Activated naive CD4-positive, alpha-beta T cell treated with anti-CD3 and anti-CD28 coated beads for 36 hours (primary cell): ENCODE measurements at regions of chr20 and their contacts with region 1.

Region 1: DNA sequence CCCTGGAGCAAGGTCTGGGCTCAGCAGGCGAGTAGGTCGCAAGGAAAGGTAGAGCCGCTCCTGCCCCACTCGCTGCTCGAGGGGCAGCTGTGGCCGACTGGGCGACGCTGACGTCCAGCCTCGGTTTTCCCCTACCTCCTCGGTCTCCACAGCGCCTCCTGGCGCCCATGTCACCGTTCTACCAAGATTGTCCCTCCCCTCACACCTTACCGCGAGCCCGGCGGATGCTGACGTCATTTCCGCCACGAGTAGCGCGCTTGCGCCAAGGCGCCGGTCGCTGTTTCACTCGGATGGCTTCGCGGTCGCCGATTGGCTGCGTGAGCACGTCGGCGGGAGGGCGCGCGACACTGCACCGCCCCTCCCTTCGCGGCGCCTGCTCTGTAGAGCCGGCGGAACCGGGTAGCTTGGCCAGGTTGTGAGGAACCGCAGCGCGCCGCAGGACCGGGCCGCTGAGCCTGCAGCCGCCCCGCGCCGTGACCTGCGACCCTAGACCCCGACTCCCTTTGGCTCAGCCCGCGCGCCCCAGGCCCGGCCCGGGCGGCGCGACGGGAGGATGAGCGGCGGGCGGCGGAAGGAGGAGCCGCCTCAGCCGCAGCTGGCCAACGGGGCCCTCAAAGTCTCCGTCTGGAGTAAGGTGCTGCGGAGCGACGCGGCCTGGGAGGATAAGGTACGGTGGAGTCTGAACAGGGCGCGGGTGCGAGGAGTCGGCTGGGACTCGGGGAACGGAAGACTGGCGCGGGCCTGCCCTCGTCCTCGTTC is at the start of gene RAB5IF:
- DNase-seq: peak; percentile 99
- H3K4me3 Mint-ChIP-seq: peak within 1 kb of the TSS; percentile 97
- H3K27ac Mint-ChIP-seq: peak within 1 kb of the TSS; percentile 95
- H3K4me1 Mint-ChIP-seq: peaks cover 25% of the 10 kb centered on the region
- H3K27me3 Mint-ChIP-seq: no peaks in the 10 kb centered on the region
- total RNA-seq, gene RAB5IF: 79.8 to 85.9 TPM

Region 2: GRCh38 chr20:36506253-36506652 is 99.3 kb before region 1 on chr20:
- CTCF ChIA-PET with region 1: interaction called, 4 read pairs
- intact Hi-C with region 1: loop called (anchors 5 kb)
- DNase-seq: peak; percentile 20
- H3K4me3 Mint-ChIP-seq: no peak overlapping the region
- H3K27ac Mint-ChIP-seq: no peak overlapping the region
- H3K4me1 Mint-ChIP-seq: peaks cover 15% of the 10 kb centered on the region
- H3K27me3 Mint-ChIP-seq: no peaks in the 10 kb centered on the region

Region 3: GRCh38 chr20:36573103-36573794 is 32.3 kb before region 1 on chr20 and contains the start of gene TGIF2:
- CTCF ChIA-PET with region 1: interaction called, 6 read pairs
- intact Hi-C with region 1: loop called (anchors 1 kb)
- DNase-seq: peak; percentile 90
- H3K4me3 Mint-ChIP-seq: peak within 1 kb of the TSS; percentile 91
- H3K27ac Mint-ChIP-seq: peak within 1 kb of the TSS; percentile 93
- H3K4me1 Mint-ChIP-seq: peaks cover 35% of the 10 kb centered on the region
- H3K27me3 Mint-ChIP-seq: no peaks in the 10 kb centered on the region
- total RNA-seq, gene TGIF2: 32.2 to 33.6 TPM

Region 4: DNA sequence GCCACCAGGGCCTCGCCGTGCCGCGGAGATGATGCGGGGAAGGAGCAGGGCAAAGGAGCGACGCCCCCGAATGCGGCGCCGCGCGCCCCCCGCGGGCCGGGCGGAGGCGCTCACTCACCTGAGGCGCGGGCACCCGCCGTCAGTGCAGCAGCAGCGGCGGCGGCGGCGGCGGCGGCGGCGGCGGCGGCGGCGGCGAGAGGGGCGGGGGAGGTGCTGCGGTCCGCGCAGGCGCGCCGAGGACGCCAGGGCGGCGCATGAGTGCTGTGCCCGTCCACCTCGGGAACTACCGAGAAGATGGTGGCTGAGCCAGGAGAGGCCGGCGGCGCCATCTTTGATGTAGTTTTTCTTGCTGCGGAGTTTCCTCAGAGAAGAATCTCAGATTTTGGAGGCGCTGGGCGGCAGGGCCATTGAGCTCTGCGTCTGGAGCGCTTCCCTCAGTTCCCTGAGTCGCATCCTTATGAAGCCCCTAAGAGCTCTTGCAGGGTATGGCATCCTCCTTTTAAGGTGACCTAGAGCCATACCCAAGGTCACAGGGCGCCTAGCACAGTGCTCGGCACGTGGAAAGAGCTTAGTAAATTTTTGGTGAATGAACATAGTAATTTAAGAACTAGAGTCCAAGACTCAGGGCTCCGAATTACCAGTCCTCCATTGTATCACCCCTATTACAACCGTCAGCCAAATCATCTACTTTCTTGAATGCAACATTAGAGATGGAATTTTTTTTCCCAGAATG is 140.5 kb after region 1 on chr20 and contains the start of gene NDRG3:
- CTCF ChIA-PET with region 1: interaction called, 8 read pairs
- intact Hi-C with region 1: loop called (anchors 1 kb)
- DNase-seq: peak; percentile 96
- H3K4me3 Mint-ChIP-seq: peak within 1 kb of the TSS; percentile 86
- H3K27ac Mint-ChIP-seq: peak within 1 kb of the TSS; percentile 86
- H3K4me1 Mint-ChIP-seq: peaks cover 21% of the 10 kb centered on the region
- H3K27me3 Mint-ChIP-seq: no peaks in the 10 kb centered on the region
- total RNA-seq, gene NDRG3: 26.1 to 28.2 TPM